Sciatic nerve (tissue), 2 donors: ENCODE measurements at regions of chr20 and their contacts with region 1.

Region 1: DNA sequence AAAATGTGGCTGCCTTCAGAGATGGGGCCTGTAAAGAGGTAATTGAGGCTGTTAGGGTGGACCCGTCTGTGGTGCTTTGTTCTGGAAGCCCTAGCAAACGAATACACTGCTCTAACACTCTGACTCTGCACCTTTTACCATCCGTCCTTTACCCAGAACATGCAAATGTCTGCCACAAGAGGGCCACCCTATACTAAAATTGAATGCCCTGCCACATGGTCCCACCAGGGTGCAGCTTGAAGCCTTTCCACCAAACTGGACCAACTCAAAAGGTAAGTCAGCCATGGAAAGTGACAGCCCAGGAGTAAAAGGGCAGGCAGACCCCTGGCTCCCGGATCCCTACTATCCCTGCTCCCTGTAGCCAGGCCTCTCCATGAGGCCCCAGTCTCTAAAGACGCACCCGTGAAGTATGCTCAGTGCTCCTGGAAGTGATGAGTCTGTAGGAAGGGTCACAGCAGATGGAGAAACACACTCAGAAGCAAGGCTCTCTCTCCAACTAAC is 5.8 kb upstream of the BFSP1 start:
- DNase-seq: peak; percentile 77
- ATAC-seq: peak; percentile 96

Region 2: DNA sequence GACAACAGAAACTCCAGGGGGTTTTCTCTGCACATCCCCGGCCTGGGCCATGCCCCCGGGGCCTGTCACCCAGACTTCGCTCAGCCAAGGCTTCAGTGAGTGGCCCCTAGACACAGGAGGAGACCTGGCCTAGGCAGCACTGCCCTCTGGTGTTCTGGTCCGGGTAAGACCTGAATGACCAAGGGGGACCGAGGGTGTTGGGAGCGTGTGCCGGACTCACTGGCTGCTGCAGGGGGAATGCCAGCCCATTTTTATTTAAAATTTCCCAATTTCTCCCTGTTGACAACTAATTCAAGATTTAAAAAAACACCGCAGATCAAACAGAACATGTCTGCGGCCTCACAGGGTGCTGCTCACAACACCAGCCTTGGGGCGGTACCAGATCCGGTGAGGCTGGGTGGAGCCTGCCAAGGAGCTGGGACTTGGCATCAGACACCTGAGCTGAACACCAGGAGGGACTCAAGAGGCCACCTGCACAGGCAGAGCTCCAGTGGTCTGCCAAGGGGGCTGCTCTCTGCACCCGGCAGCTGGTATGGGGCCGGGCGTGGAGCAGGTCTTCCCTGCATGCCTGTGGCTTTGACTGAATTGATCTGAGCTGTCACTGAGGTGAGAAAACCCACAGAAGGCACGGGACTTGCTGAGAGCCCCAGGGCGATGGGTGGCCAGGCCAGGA is 80.7 kb after region 1 on chr20:
- intact Hi-C with region 1: loop called (anchors 10 kb)
- DNase-seq: peak; percentile 82
- ATAC-seq: peak; percentile 69

Region 3: GRCh38 chr20:17904027-17904426 is 367.0 kb after region 1 on chr20:
- intact Hi-C with region 1: loop called (anchors 10 kb)
- DNase-seq: no peak
- ATAC-seq: no peak